ENCODE measurements at regions of chr22 and their contacts with region 1.

Region 1: DNA sequence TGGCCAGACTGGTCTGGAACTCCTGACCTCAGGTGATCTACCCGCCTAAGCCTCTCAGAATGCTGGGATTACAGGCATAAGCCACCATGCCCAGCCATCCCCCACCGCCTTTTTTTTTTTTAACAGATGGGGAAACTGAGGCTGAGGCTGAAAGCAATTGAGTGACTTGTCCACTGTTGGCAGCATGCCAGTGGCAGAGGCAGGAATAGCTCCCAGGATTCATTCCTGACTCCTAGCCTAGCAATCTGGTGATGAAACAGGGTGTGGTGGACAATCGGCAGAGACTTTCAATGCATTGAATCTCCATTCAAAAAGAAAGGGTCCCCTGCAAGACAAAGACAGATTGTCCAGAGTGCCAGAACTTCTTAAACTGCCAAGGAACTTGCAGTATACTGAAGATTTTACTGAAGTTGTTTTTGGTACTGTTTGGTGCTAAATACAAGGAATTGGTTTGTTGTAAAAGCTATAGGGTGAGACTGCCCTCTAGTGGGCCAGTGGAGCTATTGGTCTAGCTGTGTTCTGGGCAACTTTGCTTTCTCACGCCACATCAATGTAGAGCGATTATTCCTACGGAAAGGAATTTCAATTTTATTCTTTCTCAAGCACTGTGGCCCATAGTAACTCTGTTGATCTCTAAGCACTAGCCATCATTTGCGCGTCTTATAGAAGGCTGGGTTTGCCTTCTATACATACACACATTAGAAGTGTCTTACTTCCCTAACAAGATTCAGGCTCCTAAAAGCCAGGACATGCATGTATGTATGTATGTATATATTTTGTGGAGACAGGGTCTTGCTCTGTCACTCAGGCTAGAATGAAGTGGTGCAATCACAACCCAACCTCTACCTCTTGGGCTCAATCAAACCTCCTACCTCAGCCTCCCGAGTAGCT is 21.0 kb downstream of the C22orf31 start:
- DNase-seq: no peak
- H3K4me3 ChIP-seq: no peak overlapping the region
- H3K27ac ChIP-seq: no peak overlapping the region
- H3K4me1 ChIP-seq: peaks cover 0 to 3% (median 0%) of the 10 kb centered on the region in 4 experiments; a peak in 3 of 7 replicates
- H3K27me3 ChIP-seq: no peaks in the 10 kb centered on the region
- CTCF ChIP-seq: peak; percentile 48 to 91 (median 88)
- EP300 ChIP-seq: no peak
- POLR2A ChIP-seq: no peak
- RAD21 ChIP-seq: peak; percentile 92 to 98

Region 2: DNA sequence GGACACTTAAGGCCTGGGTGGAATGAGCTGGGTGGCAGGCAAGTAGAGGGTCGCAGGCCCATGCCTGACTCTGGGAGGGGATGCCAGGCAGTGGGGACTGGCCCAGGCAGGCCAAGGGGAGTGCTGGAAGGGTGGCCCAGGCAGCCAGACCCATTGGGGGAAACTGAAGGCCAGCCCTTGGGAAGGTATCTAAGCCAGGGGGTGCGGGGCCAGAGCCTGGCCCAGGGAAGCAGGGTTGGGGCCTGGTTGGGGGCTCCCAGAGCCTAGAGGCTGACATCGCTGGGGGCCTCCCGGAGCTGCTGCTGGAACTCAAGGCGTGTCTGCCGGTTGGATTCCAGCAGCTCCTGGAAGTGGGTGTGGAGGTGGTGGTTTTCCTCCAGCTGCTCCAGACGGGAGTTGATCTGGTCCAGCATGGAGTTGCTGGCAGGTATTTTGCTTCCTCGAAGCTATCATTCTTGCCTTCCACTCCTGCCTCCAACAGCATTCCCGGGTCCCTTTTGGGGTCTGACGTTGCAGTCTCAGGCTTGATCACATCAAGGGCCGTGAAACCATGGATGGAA is 204.9 kb before region 1 on chr22:
- CTCF ChIA-PET with region 1: interaction called, 18 read pairs
- POLR2A ChIA-PET with region 1: no interaction called
- DNase-seq: no peak
- H3K4me3 ChIP-seq: no peak overlapping the region
- H3K27ac ChIP-seq: no peak overlapping the region
- H3K4me1 ChIP-seq: no peaks in the 10 kb centered on the region; a peak in 1 of 7 replicates
- H3K27me3 ChIP-seq: no peaks in the 10 kb centered on the region
- CTCF ChIP-seq: no peak
- EP300 ChIP-seq: no peak
- POLR2A ChIP-seq: no peak
- RAD21 ChIP-seq: no peak

Region 3: GRCh38 chr22:28855355-28856094 is 185.1 kb before region 1 on chr22:
- CTCF ChIA-PET with region 1: interaction called, 67 read pairs
- POLR2A ChIA-PET with region 1: interaction called, 3 read pairs
- DNase-seq: peak in 1 of 2 experiments; percentile 66
- H3K4me3 ChIP-seq: no peak overlapping the region
- H3K27ac ChIP-seq: no peak overlapping the region
- H3K4me1 ChIP-seq: peaks cover 0 to 4% (median 0%) of the 10 kb centered on the region in 4 experiments; a peak in 1 of 7 replicates
- H3K27me3 ChIP-seq: no peaks in the 10 kb centered on the region
- CTCF ChIP-seq: peak in 2 of 3 experiments; percentile 86 to 94; a peak in 3 of 4 replicates
- EP300 ChIP-seq: no peak
- POLR2A ChIP-seq: no peak
- RAD21 ChIP-seq: peak; percentile 95

Region 4: DNA sequence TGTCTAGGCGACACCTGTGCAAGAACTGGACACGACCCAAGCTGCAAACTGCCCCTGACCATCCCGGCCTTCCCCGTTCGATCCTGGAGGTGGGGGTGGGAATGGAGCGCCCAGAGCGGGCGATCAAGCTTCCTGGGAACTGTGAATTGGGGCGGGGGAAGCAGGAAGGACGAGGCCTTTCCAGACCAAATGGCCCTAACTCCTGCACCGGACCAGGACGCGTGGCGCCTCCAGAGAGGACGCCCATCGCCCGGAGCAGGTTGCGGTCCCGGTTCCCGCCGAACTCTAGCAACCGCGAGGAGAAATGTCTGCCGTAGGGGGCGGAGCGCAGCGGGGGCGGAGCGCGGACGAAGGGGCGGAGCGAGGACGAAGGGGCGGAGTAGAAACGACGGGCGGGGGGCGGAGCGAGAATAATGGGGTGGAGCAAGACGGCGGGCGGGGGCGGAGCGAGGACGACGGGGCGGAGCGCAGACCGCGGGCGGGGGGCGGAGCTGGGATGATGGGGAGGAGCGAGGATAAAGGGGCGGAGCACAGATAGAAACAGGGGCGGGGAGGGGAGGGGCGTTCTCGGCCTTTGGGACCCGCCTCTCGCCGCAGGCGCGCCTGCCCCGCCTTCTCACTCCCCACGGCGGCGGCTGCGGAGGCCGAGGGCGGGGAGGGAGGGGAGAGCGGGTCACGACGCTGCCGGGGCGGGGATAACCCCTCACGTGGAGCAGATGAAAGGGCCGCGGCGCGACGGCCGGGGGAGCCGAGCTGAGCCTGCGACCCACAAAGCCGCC is 157.6 kb before region 1 on chr22 and contains the start of gene ZNRF3:
- CTCF ChIA-PET with region 1: interaction called, 26 read pairs
- POLR2A ChIA-PET with region 1: interaction called, 3 read pairs
- DNase-seq: peak; percentile 79 to 99
- H3K4me3 ChIP-seq: peak within 1 kb of the TSS; percentile 68 to 92 (median 80)
- H3K27ac ChIP-seq: peak within 1 kb of the TSS; percentile 83
- H3K4me1 ChIP-seq: peaks cover 3 to 14% (median 12%) of the 10 kb centered on the region in 4 experiments
- H3K27me3 ChIP-seq: peaks cover 0 to 3% (median 0%) of the 10 kb centered on the region in 4 experiments; a peak in 1 of 7 replicates
- CTCF ChIP-seq: no peak
- EP300 ChIP-seq: no peak
- POLR2A ChIP-seq: peak in 1 of 2 experiments; percentile 90; a peak in 2 of 3 replicates
- RAD21 ChIP-seq: no peak
- total RNA-seq, gene ZNRF3: 20.6 and 21.7 TPM in 2 replicates

Region 5: GRCh38 chr22:28917747-28918549 is 122.7 kb before region 1 on chr22:
- CTCF ChIA-PET with region 1: interaction called, 37 read pairs
- POLR2A ChIA-PET with region 1: interaction called, 3 read pairs
- DNase-seq: no peak
- H3K4me3 ChIP-seq: peak overlapping the region in 1 of 4 experiments; percentile 5; a peak in 2 of 8 replicates
- H3K27ac ChIP-seq: no peak overlapping the region
- H3K4me1 ChIP-seq: peaks cover 13 to 20% (median 17%) of the 10 kb centered on the region in 4 experiments
- H3K27me3 ChIP-seq: no peaks in the 10 kb centered on the region
- CTCF ChIP-seq: peak in 1 of 3 experiments; percentile 3; a peak in 1 of 4 replicates
- EP300 ChIP-seq: no peak
- POLR2A ChIP-seq: no peak
- RAD21 ChIP-seq: peak in 1 of 2 experiments; percentile 18; a peak in 1 of 4 replicates

Region 6: GRCh38 chr22:28943501-28943879 is 97.1 kb before region 1 on chr22:
- CTCF ChIA-PET with region 1: interaction called, 14 read pairs
- POLR2A ChIA-PET with region 1: no interaction called
- DNase-seq: no peak
- H3K4me3 ChIP-seq: no peak overlapping the region
- H3K27ac ChIP-seq: no peak overlapping the region
- H3K4me1 ChIP-seq: peaks cover 2 to 13% (median 10%) of the 10 kb centered on the region in 4 experiments; a peak in 6 of 7 replicates
- H3K27me3 ChIP-seq: no peaks in the 10 kb centered on the region
- CTCF ChIP-seq: no peak
- EP300 ChIP-seq: no peak
- POLR2A ChIP-seq: no peak
- RAD21 ChIP-seq: no peak

Region 7: GRCh38 chr22:29115682-29116288 is 75.2 kb after region 1 on chr22:
- CTCF ChIA-PET with region 1: no interaction called
- POLR2A ChIA-PET with region 1: no interaction called
- DNase-seq: no peak
- H3K4me3 ChIP-seq: no peak overlapping the region
- H3K27ac ChIP-seq: no peak overlapping the region
- H3K4me1 ChIP-seq: peaks cover 0 to 2% (median 0%) of the 10 kb centered on the region in 4 experiments; a peak in 1 of 7 replicates
- H3K27me3 ChIP-seq: no peaks in the 10 kb centered on the region
- CTCF ChIP-seq: no peak
- EP300 ChIP-seq: no peak
- POLR2A ChIP-seq: no peak
- RAD21 ChIP-seq: no peak

Measured in H1 (cell line).